Transverse colon (tissue), 4 donors: ENCODE measurements at regions of chr1 and their contacts with region 1.

Region 1: GRCh38 chr1:79161077-79161476 is 154.5 kb upstream of the ADGRL4 start:
- DNase-seq: no peak
- H3K4me3 ChIP-seq: no peak overlapping the region
- H3K27ac ChIP-seq: no peak overlapping the region
- H3K4me1 ChIP-seq: no peaks in the 10 kb centered on the region
- H3K27me3 ChIP-seq: no peaks in the 10 kb centered on the region
- CTCF ChIP-seq: no peak
- EP300 ChIP-seq: no peak
- POLR2A ChIP-seq: no peak

Region 2: DNA sequence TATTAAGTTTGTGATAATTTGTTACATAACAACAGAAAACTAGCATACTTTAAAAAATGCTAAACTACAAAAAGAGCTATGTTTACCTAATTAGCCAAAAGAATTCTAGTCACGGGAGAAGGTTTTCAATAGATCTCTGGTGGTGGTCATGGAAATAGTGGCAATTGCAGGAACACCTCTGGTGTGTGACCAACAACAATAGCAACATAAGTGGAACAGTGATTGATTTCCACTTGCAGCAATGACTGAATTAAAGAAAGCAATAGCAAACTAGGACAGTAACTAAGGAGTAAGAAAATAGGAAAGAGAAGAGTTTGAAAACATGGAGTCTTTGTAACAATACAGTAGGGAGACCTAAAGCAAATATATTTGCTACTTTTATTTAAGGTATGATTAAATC is 16.8 kb after region 1 on chr1:
- in situ Hi-C with region 1: no loop called
- intact Hi-C with region 1: loop called (anchors 2 kb)
- DNase-seq: no peak
- H3K4me3 ChIP-seq: no peak overlapping the region
- H3K27ac ChIP-seq: no peak overlapping the region
- H3K4me1 ChIP-seq: no peaks in the 10 kb centered on the region
- H3K27me3 ChIP-seq: no peaks in the 10 kb centered on the region
- CTCF ChIP-seq: no peak
- EP300 ChIP-seq: no peak
- POLR2A ChIP-seq: no peak